Uterus (tissue), 4 donors: ENCODE measurements at regions of chr10 and their contacts with region 1.

Region 1: GRCh38 chr10:12264204-12264940 is 68.4 kb downstream of the CDC123 start:
- DNase-seq: peak; percentile 50 to 73
- H3K4me3 ChIP-seq: peak overlapping the region; percentile 20 to 31
- H3K27ac ChIP-seq: peak overlapping the region in 1 of 2 donors; percentile 39
- H3K4me1 ChIP-seq: no peaks in the 10 kb centered on the region
- H3K27me3 ChIP-seq: no peaks in the 10 kb centered on the region
- CTCF ChIP-seq: peak; percentile 88 to 94 (median 89)
- POLR2A ChIP-seq: no peak

Region 2: GRCh38 chr10:11602919-11603523 is 661.4 kb before region 1 on chr10:
- intact Hi-C with region 1: no loop called
- DNase-seq: no peak
- H3K4me3 ChIP-seq: no peak overlapping the region
- H3K27ac ChIP-seq: no peak overlapping the region
- H3K4me1 ChIP-seq: no peaks in the 10 kb centered on the region
- H3K27me3 ChIP-seq: no peaks in the 10 kb centered on the region
- CTCF ChIP-seq: no peak
- POLR2A ChIP-seq: no peak

Region 3: GRCh38 chr10:12656518-12657142 is 392.3 kb after region 1 on chr10:
- intact Hi-C with region 1: loop called (anchors 10 kb)
- DNase-seq: no peak
- H3K4me3 ChIP-seq: no peak overlapping the region
- H3K27ac ChIP-seq: no peak overlapping the region
- H3K4me1 ChIP-seq: no peaks in the 10 kb centered on the region
- H3K27me3 ChIP-seq: no peaks in the 10 kb centered on the region
- CTCF ChIP-seq: peak; percentile 35 to 75 (median 60)
- POLR2A ChIP-seq: no peak

Region 4: GRCh38 chr10:12667052-12667451 is 402.7 kb after region 1 on chr10:
- intact Hi-C with region 1: no loop called
- DNase-seq: no peak
- H3K4me3 ChIP-seq: no peak overlapping the region
- H3K27ac ChIP-seq: no peak overlapping the region
- H3K4me1 ChIP-seq: no peaks in the 10 kb centered on the region
- H3K27me3 ChIP-seq: no peaks in the 10 kb centered on the region
- CTCF ChIP-seq: no peak
- POLR2A ChIP-seq: no peak